ENCODE measurements at regions of chr2 and their contacts with region 1.

Region 1: GRCh38 chr2:218849721-218850120 is 9.9 kb upstream of the WNT6 start:
- DNase-seq: no peak
- H3K4me3 ChIP-seq: no peak overlapping the region
- H3K27ac ChIP-seq: no peak overlapping the region
- H3K4me1 ChIP-seq: peaks cover 0 to 18% (median 5%) of the 10 kb centered on the region in 6 donors
- H3K27me3 ChIP-seq: peaks cover 0 to 69% (median 20%) of the 10 kb centered on the region in 7 donors
- CTCF ChIP-seq: no peak
- POLR2A ChIP-seq: no peak

Region 2: GRCh38 chr2:218710687-218711549 is 138.8 kb before region 1 on chr2 and contains the start of gene TTLL4:
- intact Hi-C with region 1: loop called (anchors 5 kb)
- DNase-seq: peak; percentile 100
- H3K4me3 ChIP-seq: peak within 1 kb of the TSS; percentile 55 to 91 (median 87)
- H3K27ac ChIP-seq: peak within 1 kb of the TSS; percentile 85 to 95 (median 90)
- H3K4me1 ChIP-seq: peaks cover 9 to 56% (median 28%) of the 10 kb centered on the region in 6 donors
- H3K27me3 ChIP-seq: no peaks in the 10 kb centered on the region
- CTCF ChIP-seq: peak; percentile 91 to 98 (median 97)
- POLR2A ChIP-seq: peak in 1 of 3 donors; percentile 33
- total RNA-seq, gene TTLL4: 14.5 to 40.5 (median 28.6) TPM